ENCODE measurements at regions of chr6 and their contacts with region 1.

Region 1: DNA sequence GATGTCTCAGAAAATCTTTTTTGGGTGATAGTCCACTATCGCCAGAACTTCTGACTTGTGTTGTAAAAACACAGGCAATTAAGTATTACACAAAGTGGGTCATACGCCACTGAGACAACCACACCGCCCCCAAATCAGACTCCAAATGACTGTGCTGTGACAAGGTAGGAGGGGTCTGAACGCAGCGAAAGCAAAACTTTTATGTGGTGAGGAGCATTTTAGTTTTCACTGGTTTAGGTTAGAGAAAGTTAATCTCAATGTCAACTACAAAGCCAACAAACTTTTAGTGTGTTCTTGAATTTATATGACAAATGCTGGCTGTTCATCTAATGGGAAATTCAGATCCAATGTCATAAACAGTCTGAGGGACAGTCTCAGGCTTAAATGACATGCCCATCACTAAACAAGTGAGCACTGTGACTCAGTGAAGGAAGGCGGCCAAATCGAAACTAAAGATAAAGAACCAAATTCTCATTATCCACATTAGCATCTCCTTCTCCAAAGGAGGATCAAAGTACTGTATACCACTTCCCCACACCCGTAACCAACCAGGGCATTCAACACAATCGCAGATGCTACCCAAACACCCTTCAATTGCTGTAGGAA is 186.7 kb downstream of the GJA10 start:
- DNase-seq: peak; percentile 94
- H3K4me3 Mint-ChIP-seq: peak overlapping the region; percentile 87
- H3K27ac Mint-ChIP-seq: peak overlapping the region; percentile 94
- H3K4me1 Mint-ChIP-seq: peaks cover 77% of the 10 kb centered on the region
- H3K27me3 Mint-ChIP-seq: no peaks in the 10 kb centered on the region

Region 2: DNA sequence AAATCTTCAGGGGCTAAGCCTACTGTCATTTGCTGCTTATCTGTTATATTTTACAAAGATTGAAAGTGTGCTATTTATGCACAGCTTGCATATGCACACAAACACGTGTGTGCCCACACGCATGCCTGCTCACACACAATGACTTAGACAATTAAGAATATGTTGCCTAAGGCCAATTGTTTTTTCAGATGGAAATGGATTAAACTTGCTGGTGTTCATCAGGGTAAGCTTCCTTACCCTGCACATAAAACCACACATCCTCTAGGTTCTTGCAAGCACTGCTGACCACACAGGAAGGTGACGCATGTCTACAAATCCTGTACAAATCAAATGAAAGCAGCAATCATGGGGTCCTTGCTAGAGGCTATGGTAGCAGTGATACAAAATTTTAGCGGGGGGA is 128.3 kb before region 1 on chr6:
- intact Hi-C with region 1: loop called (anchors 1 kb)
- DNase-seq: peak; percentile 89
- H3K4me3 Mint-ChIP-seq: peak overlapping the region; percentile 69
- H3K27ac Mint-ChIP-seq: peak overlapping the region; percentile 84
- H3K4me1 Mint-ChIP-seq: peaks cover 63% of the 10 kb centered on the region
- H3K27me3 Mint-ChIP-seq: no peaks in the 10 kb centered on the region

Region 3: GRCh38 chr6:90068264-90068663 is 12.7 kb before region 1 on chr6:
- intact Hi-C with region 1: loop called (anchors 1 kb)
- DNase-seq: no peak
- H3K4me3 Mint-ChIP-seq: peak overlapping the region; percentile 57
- H3K27ac Mint-ChIP-seq: peak overlapping the region; percentile 81
- H3K4me1 Mint-ChIP-seq: peaks cover 72% of the 10 kb centered on the region
- H3K27me3 Mint-ChIP-seq: no peaks in the 10 kb centered on the region

Region 4: DNA sequence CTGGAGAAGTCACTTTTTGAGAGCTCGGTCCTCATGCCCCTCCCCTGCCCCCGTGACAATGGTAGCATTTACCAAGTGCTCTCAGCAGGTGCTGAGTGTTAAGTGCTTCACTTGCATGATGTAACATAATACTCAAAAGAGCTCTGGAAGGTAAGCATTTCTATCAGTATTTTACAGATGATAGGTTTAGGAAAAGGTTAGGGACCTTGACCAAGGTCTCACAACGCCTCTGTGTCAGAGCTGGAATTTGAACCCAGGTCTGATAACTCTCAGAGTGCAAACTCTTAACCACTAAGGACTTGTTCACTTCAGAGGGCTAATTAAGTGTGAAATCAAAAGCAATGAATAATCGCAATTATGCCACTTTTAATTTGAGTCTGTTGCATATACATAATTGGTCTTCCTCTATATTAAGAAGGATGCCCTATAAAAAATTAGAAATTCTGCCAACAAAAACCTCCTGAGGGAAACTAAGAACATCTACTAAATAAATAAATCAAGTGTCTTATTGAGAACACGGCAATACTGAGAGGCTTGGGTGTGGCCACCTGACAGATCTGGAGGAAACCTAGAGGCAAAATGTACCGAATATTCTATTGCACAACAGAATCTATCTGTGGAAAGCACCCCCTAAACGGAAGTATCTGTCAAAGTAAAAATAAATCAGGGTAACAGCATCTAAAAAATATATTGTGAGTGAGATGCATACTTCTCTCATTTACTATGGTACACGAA is 105.8 kb after region 1 on chr6:
- intact Hi-C with region 1: loop called (anchors 1 kb)
- DNase-seq: peak; percentile 75
- H3K4me3 Mint-ChIP-seq: peak overlapping the region; percentile 86
- H3K27ac Mint-ChIP-seq: peak overlapping the region; percentile 89
- H3K4me1 Mint-ChIP-seq: peaks cover 71% of the 10 kb centered on the region
- H3K27me3 Mint-ChIP-seq: no peaks in the 10 kb centered on the region

Region 5: GRCh38 chr6:90274451-90275030 is 193.6 kb after region 1 on chr6:
- intact Hi-C with region 1: loop called (anchors 1 kb)
- DNase-seq: peak; percentile 94
- H3K4me3 Mint-ChIP-seq: peak overlapping the region; percentile 76
- H3K27ac Mint-ChIP-seq: peak overlapping the region; percentile 96
- H3K4me1 Mint-ChIP-seq: peaks cover 79% of the 10 kb centered on the region
- H3K27me3 Mint-ChIP-seq: no peaks in the 10 kb centered on the region

Region 6: GRCh38 chr6:90425161-90425641 is 344.2 kb after region 1 on chr6:
- intact Hi-C with region 1: loop called (anchors 1 kb)
- DNase-seq: peak; percentile 78
- H3K4me3 Mint-ChIP-seq: peak overlapping the region; percentile 69
- H3K27ac Mint-ChIP-seq: peak overlapping the region; percentile 91
- H3K4me1 Mint-ChIP-seq: peaks cover 24% of the 10 kb centered on the region
- H3K27me3 Mint-ChIP-seq: no peaks in the 10 kb centered on the region